ENCODE measurements at regions of chr17 and their contacts with region 1.

Region 1: DNA sequence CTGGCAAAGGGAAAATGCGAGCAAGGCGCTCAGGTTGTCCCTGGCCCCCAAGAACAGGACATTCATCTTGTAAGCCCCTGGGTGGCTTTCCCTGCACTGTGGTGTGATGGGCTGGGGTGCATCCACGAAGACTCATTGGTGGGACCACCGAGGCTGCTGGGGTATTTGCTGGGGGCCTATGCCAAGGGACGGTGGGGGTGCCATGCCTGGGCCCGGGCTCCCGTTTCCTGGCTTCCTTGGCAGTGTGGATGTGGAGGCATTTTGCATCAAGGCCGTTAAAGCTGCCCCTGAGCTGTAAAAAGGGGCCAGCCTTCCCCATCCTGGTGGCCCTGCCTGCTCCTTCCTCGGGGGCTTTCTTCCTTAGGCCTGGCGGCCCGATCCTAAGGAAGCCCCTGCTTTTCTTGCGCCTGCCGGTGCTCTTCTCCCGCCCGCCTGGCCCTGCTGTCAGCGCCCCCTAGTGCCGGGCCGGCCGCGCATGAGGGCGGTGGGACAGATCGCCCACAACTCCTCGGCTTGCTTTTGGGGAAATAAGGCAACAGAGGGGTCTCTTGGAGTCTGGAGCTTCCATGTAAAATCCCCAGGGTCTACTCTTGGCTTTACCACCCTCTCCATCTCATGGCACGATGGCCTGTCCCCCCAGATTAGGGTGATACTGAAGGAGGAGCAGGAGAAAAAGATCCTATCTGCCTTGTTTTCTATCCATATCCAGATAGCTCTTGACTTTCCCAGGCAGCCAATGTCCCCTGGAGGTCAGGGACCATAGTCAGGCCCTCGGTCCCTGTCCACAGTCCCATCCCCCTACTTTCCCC is 9.8 kb upstream of the TBX2 start:
- DNase-seq: peak; percentile 59
- H3K4me3 Mint-ChIP-seq: no peak overlapping the region
- H3K27ac Mint-ChIP-seq: no peak overlapping the region
- H3K4me1 Mint-ChIP-seq: peaks cover 4% of the 10 kb centered on the region
- H3K27me3 Mint-ChIP-seq: peaks cover 10% of the 10 kb centered on the region

Region 2: DNA sequence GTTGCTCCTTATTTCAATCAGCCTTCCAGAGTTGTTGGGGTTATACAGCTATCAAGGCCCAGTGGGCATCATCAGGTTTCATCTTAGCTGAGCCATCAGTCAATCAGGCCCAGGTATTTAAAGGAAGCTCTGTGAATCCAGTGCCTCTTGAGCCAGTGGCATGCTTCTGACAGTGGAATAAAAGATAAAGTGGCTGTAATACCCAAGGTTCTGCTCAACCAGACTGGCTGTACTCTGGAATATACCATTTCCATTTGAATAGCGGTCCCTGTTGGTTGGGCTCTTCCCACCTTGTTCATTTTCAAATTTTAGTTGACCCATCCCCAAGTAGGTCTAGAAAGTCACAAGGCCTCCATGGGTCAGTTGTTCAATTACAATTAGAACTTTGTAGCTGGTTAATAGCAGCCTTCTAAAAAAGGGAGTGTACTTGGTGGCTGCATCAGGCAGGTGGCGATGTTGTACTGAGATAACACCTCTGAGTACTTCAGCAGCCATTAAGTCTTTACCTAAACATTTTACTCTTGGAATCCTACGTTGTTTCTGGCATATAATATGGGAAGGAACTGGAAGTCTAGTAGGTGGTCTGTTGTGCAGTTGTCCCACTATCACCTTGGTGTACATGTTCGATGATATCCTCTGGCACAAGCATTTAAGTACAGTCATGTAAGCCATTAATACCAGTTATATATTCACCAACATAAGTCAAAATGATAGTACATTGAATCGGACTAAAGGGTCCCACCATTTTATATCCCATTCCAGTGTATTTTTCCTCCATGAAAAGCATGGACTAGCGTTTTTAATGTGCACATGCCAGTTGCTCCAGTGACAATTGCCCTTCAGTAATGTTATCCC is 418.1 kb before region 1 on chr17:
- CTCF ChIA-PET with region 1: interaction called, 3 read pairs
- intact Hi-C with region 1: loop called (anchors 1 kb)
- DNase-seq: peak; percentile 69
- H3K4me3 Mint-ChIP-seq: no peak overlapping the region
- H3K27ac Mint-ChIP-seq: no peak overlapping the region
- H3K4me1 Mint-ChIP-seq: no peaks in the 10 kb centered on the region
- H3K27me3 Mint-ChIP-seq: no peaks in the 10 kb centered on the region

Region 3: GRCh38 chr17:61002316-61002736 is 387.5 kb before region 1 on chr17:
- CTCF ChIA-PET with region 1: interaction called, 8 read pairs
- intact Hi-C with region 1: loop called (anchors 1 kb)
- DNase-seq: no peak
- H3K4me3 Mint-ChIP-seq: no peak overlapping the region
- H3K27ac Mint-ChIP-seq: no peak overlapping the region
- H3K4me1 Mint-ChIP-seq: no peaks in the 10 kb centered on the region
- H3K27me3 Mint-ChIP-seq: no peaks in the 10 kb centered on the region

Region 4: GRCh38 chr17:61307905-61308886 is 81.7 kb before region 1 on chr17:
- CTCF ChIA-PET with region 1: no interaction called
- intact Hi-C with region 1: no loop called
- DNase-seq: no peak
- H3K4me3 Mint-ChIP-seq: no peak overlapping the region
- H3K27ac Mint-ChIP-seq: no peak overlapping the region
- H3K4me1 Mint-ChIP-seq: no peaks in the 10 kb centered on the region
- H3K27me3 Mint-ChIP-seq: no peaks in the 10 kb centered on the region

Measured in activated naive CD4-positive, alpha-beta T cell treated with anti-CD3 and anti-CD28 coated beads for 36 hours (primary cell).